ENCODE measurements at regions of chr2 and their contacts with region 1.

Region 1: GRCh38 chr2:64157792-64158191 is 13.6 kb upstream of the PELI1 start:
- DNase-seq: no peak
- ATAC-seq: no peak
- H3K4me3 ChIP-seq: no peak overlapping the region
- H3K4me3 Mint-ChIP-seq: no peak overlapping the region
- H3K27ac ChIP-seq: no peak overlapping the region
- H3K27ac Mint-ChIP-seq: no peak overlapping the region
- H3K4me1 ChIP-seq: no peaks in the 10 kb centered on the region
- H3K4me1 Mint-ChIP-seq: no peaks in the 10 kb centered on the region
- H3K27me3 ChIP-seq: no peaks in the 10 kb centered on the region
- H3K27me3 Mint-ChIP-seq: no peaks in the 10 kb centered on the region
- CTCF ChIP-seq: no peak

Region 2: GRCh38 chr2:64179582-64180321 is 22.0 kb after region 1 on chr2:
- CTCF ChIA-PET with region 1: interaction called, 5 read pairs
- POLR2A ChIA-PET with region 1: no interaction called
- intact Hi-C with region 1: loop called in 1 of 2 experiments (anchors 2 kb)
- DNase-seq: peak in 3 of 14 experiments; percentile 17 to 33 (median 25)
- ATAC-seq: no peak
- H3K4me3 ChIP-seq: no peak overlapping the region
- H3K4me3 Mint-ChIP-seq: no peak overlapping the region
- H3K27ac ChIP-seq: no peak overlapping the region
- H3K27ac Mint-ChIP-seq: no peak overlapping the region
- H3K4me1 ChIP-seq: no peaks in the 10 kb centered on the region
- H3K4me1 Mint-ChIP-seq: peaks cover 5% of the 10 kb centered on the region
- H3K27me3 ChIP-seq: no peaks in the 10 kb centered on the region
- H3K27me3 Mint-ChIP-seq: no peaks in the 10 kb centered on the region
- CTCF ChIP-seq: no peak

Region 3: GRCh38 chr2:64192125-64192479 is 34.3 kb after region 1 on chr2:
- CTCF ChIA-PET with region 1: no interaction called
- POLR2A ChIA-PET with region 1: no interaction called
- intact Hi-C with region 1: loop called in 1 of 2 experiments (anchors 1 kb)
- DNase-seq: peak in 2 of 14 experiments; percentile 49 to 57
- ATAC-seq: no peak
- H3K4me3 ChIP-seq: no peak overlapping the region
- H3K4me3 Mint-ChIP-seq: no peak overlapping the region
- H3K27ac ChIP-seq: no peak overlapping the region
- H3K27ac Mint-ChIP-seq: no peak overlapping the region
- H3K4me1 ChIP-seq: no peaks in the 10 kb centered on the region
- H3K4me1 Mint-ChIP-seq: peaks cover 34% of the 10 kb centered on the region
- H3K27me3 ChIP-seq: no peaks in the 10 kb centered on the region
- H3K27me3 Mint-ChIP-seq: no peaks in the 10 kb centered on the region
- CTCF ChIP-seq: no peak